ENCODE measurements at regions of chr5 and their contacts with region 1.

Region 1: GRCh38 chr5:157731272-157732129 is at the start of gene THG1L:
- DNase-seq: peak; percentile 94
- ATAC-seq: peak; percentile 92
- H3K4me3 ChIP-seq: peak within 1 kb of the TSS; percentile 85
- H3K27ac ChIP-seq: peak within 1 kb of the TSS; percentile 92
- H3K4me1 ChIP-seq: peaks cover 21% of the 10 kb centered on the region
- H3K27me3 ChIP-seq: no peaks in the 10 kb centered on the region
- CTCF ChIP-seq: no peak
- EP300 ChIP-seq: no peak
- POLR2A ChIP-seq: peak; percentile 97
- RAD21 ChIP-seq: no peak
- polyA plus RNA-seq, gene THG1L: 37.2 to 58.0 TPM

Region 2: GRCh38 chr5:157670662-157671591 is 60.6 kb before region 1 on chr5 and contains the start of gene C5orf52:
- CTCF ChIA-PET with region 1: interaction called, 10 read pairs
- POLR2A ChIA-PET with region 1: no interaction called
- RAD21 ChIA-PET with region 1: interaction called, 4 read pairs
- SMC1A ChIA-PET with region 1: interaction called, 4 read pairs
- in situ Hi-C with region 1: no loop called
- intact Hi-C with region 1: no loop called
- DNase-seq: peak; percentile 23
- ATAC-seq: peak; percentile 72
- H3K4me3 ChIP-seq: peak within 1 kb of the TSS; percentile 68
- H3K27ac ChIP-seq: no peak within 1 kb of the TSS
- H3K4me1 ChIP-seq: peaks cover 5% of the 10 kb centered on the region
- H3K27me3 ChIP-seq: no peaks in the 10 kb centered on the region; a peak in 3 of 4 replicates
- CTCF ChIP-seq: no peak
- EP300 ChIP-seq: no peak
- POLR2A ChIP-seq: no peak
- RAD21 ChIP-seq: 0 out of 2 replicates have a peak, but pooled peaks have one; percentile 3
- polyA plus RNA-seq, gene C5orf52: not detected

Region 3: DNA sequence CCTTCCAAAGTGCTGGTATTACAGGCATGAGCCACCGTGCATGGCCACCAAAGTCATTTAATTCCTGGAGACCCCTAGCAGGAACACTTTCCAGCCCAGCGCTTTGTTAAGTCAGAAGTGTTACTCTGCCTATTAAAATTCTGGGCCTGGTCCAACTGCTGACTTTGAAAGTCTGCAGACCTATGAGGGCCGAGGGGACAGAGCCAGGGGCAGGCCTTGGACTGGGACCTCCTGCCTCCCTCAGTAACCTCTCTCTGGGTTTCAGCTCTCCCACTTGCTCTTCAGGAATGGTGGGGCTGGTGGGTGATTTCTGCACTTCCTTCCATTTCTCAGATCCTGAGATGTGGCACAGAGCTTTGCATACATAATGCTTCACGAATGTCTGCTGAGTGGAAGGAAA is 50.5 kb before region 1 on chr5:
- CTCF ChIA-PET with region 1: no interaction called
- POLR2A ChIA-PET with region 1: no interaction called
- RAD21 ChIA-PET with region 1: no interaction called
- SMC1A ChIA-PET with region 1: no interaction called
- in situ Hi-C with region 1: no loop called
- intact Hi-C with region 1: no loop called
- DNase-seq: no peak
- ATAC-seq: no peak
- H3K4me3 ChIP-seq: no peak overlapping the region
- H3K27ac ChIP-seq: no peak overlapping the region
- H3K4me1 ChIP-seq: no peaks in the 10 kb centered on the region
- H3K27me3 ChIP-seq: no peaks in the 10 kb centered on the region; a peak in 1 of 4 replicates
- CTCF ChIP-seq: no peak
- EP300 ChIP-seq: no peak
- POLR2A ChIP-seq: no peak
- RAD21 ChIP-seq: no peak